ENCODE measurements at regions of chr3 and their contacts with region 1.

Region 1: DNA sequence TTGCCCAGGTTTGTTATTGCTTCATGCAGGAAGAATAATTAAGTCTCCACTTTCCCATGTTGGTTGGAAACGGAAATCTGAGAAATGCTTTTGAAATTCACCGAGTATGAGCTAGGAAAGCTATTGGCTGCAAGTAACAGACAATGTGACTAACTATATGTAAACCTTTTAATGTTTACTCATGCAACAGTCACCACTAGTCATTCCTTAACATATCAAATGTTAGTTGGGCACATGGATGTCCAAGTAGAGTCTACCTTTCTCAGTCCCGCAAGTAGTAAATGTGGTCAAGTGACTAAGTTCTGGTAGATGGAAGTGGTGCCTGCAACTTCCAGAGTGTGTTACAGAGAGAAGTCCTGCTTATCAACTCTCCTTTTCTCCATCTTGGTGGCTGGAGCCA is 52.5 kb downstream of the KLF15 start:
- DNase-seq: peak; percentile 53
- H3K4me3 ChIP-seq: no peak overlapping the region
- H3K27ac ChIP-seq: no peak overlapping the region
- H3K4me1 ChIP-seq: peaks cover 17% of the 10 kb centered on the region
- H3K27me3 ChIP-seq: no peaks in the 10 kb centered on the region
- CTCF ChIP-seq: no peak

Region 2: GRCh38 chr3:126373682-126374601 is 69.2 kb after region 1 on chr3:
- CTCF ChIA-PET with region 1: no interaction called
- dilution Hi-C with region 1: loop called (anchors 5 kb)
- in situ Hi-C with region 1: no loop called
- intact Hi-C with region 1: no loop called
- DNase-seq: no peak
- H3K4me3 ChIP-seq: no peak overlapping the region
- H3K27ac ChIP-seq: no peak overlapping the region
- H3K4me1 ChIP-seq: no peaks in the 10 kb centered on the region
- H3K27me3 ChIP-seq: no peaks in the 10 kb centered on the region
- CTCF ChIP-seq: no peak

Measured in mammary epithelial cell (primary cell).